ENCODE measurements at regions of chr6 and their contacts with region 1.

Region 1: DNA sequence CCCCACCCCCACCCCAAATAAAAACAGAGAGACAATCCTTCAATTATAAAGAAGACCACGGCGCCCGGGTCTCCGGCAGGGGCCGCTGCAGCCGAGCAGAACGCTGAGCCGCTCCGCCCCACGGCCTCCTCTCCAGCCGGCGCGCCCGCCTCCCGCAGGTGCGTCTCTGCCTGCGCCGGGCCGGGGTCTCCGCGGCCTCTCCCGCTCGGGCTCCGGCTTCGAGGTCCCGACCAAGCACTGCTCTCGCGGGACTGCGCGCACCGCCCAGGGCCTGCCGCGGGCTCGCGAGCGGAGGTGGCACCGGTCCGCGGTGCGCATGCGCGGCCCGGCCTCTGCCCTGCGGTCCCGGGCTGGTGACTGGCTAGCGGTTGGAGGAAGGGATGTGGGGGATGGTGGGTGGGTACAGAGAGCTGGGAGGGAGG is 241 bp upstream of the SIRT5 start:
- DNase-seq: peak; percentile 85 to 98 (median 91)
- ATAC-seq: peak; percentile 79
- H3K4me3 ChIP-seq: peak overlapping the region; percentile 97
- H3K4me3 Mint-ChIP-seq: peak overlapping the region; percentile 98
- H3K27ac ChIP-seq: peak overlapping the region; percentile 82 to 86
- H3K27ac Mint-ChIP-seq: peak overlapping the region; percentile 99
- H3K4me1 ChIP-seq: peaks cover 14% of the 10 kb centered on the region
- H3K4me1 Mint-ChIP-seq: peaks cover 34% of the 10 kb centered on the region
- H3K27me3 ChIP-seq: no peaks in the 10 kb centered on the region
- H3K27me3 Mint-ChIP-seq: no peaks in the 10 kb centered on the region
- CTCF ChIP-seq: peak; percentile 72

Region 2: DNA sequence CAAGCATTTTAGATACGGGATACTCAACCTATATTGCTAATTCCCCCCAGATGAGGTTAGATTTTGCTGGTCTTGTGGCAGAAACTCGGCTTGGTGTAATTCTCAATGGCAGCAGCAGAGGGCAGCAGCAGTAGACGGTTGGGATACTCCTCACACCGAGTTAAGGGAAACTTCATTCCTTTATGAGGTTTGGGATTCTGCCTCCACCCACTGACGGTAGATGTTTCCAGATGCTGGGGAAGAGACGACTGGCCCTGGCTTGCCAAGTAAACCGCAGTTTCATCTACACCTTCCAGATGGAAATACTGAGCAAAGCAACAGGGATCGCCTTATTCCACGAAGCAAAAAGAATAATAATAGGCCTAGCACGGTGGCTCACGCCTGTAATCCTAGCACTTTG is 237.6 kb before region 1 on chr6:
- CTCF ChIA-PET with region 1: interaction called, 7 read pairs
- POLR2A ChIA-PET with region 1: interaction called, 5 read pairs
- intact Hi-C with region 1: loop called (anchors 1 to 10 kb)
- DNase-seq: peak; percentile 54 to 84 (median 70)
- ATAC-seq: peak; percentile 87
- H3K4me3 ChIP-seq: no peak overlapping the region
- H3K4me3 Mint-ChIP-seq: no peak overlapping the region
- H3K27ac ChIP-seq: no peak overlapping the region
- H3K27ac Mint-ChIP-seq: no peak overlapping the region
- H3K4me1 ChIP-seq: peaks cover 6% of the 10 kb centered on the region
- H3K4me1 Mint-ChIP-seq: peaks cover 10% of the 10 kb centered on the region
- H3K27me3 ChIP-seq: no peaks in the 10 kb centered on the region
- H3K27me3 Mint-ChIP-seq: no peaks in the 10 kb centered on the region
- CTCF ChIP-seq: peak; percentile 93

Region 3: DNA sequence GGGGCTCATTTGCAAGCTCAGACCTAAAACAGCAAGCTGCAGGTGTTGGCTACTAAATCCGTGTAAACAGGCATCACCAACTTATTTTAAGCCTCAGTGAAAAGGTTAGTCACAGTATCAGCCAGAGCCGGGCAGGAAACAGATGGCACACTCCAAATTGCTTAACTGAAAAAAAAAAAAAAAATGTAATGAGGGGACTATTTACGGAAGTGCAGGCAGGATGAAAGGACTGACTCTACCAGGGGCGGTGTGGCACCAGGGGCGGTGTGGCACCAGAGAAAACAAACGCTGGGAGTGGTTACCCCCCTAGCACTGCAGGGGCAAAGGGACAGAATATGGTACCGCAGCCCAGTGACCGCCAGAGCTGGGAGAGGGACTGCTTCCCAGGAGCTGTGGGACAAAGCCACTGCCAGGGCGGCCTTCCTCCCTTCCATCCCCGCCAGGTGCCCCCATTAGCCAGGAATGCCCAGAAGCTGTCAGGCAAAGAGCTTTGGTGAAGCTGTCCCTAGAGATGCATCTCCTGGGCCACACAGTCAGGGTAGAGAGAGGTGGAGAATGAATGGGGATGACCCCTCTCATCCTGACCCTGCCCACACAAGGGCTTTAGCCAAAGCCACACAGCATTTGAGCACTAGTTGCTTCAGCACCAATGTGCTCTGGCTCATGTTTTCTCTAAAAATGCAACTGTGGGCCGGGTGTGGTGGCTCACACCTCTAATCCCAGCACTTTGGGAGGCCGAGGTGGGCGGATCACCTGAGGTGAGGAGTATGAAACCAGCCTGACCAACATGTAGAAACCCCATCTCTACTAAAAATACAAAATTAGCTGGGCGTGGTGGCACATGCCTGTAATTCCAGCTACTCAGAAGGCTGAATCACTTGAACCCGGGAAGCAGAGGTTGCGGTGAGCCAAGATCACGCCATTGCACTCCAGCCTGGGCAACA is 47.2 kb before region 1 on chr6:
- CTCF ChIA-PET with region 1: no interaction called
- POLR2A ChIA-PET with region 1: interaction called, 3 read pairs
- intact Hi-C with region 1: loop called in 1 of 2 experiments (anchors 1 kb)
- DNase-seq: peak in 11 of 14 experiments; percentile 3 to 65 (median 39)
- ATAC-seq: peak; percentile 96
- H3K4me3 ChIP-seq: no peak overlapping the region
- H3K4me3 Mint-ChIP-seq: peak overlapping the region; percentile 7
- H3K27ac ChIP-seq: peak overlapping the region in 1 of 2 donors; percentile 40
- H3K27ac Mint-ChIP-seq: peak overlapping the region; percentile 77
- H3K4me1 ChIP-seq: peaks cover 11% of the 10 kb centered on the region
- H3K4me1 Mint-ChIP-seq: peaks cover 18% of the 10 kb centered on the region
- H3K27me3 ChIP-seq: no peaks in the 10 kb centered on the region
- H3K27me3 Mint-ChIP-seq: no peaks in the 10 kb centered on the region
- CTCF ChIP-seq: no peak

Region 4: GRCh38 chr6:13795041-13795750 is 221.0 kb after region 1 on chr6:
- CTCF ChIA-PET with region 1: interaction called, 15 read pairs
- POLR2A ChIA-PET with region 1: no interaction called
- intact Hi-C with region 1: loop called in 1 of 2 experiments (anchors 5 kb)
- DNase-seq: peak; percentile 73 to 92 (median 82)
- ATAC-seq: peak; percentile 98
- H3K4me3 ChIP-seq: no peak overlapping the region
- H3K4me3 Mint-ChIP-seq: no peak overlapping the region
- H3K27ac ChIP-seq: no peak overlapping the region
- H3K27ac Mint-ChIP-seq: no peak overlapping the region
- H3K4me1 ChIP-seq: no peaks in the 10 kb centered on the region
- H3K4me1 Mint-ChIP-seq: no peaks in the 10 kb centered on the region
- H3K27me3 ChIP-seq: no peaks in the 10 kb centered on the region
- H3K27me3 Mint-ChIP-seq: no peaks in the 10 kb centered on the region
- CTCF ChIP-seq: peak; percentile 90

Region 5: DNA sequence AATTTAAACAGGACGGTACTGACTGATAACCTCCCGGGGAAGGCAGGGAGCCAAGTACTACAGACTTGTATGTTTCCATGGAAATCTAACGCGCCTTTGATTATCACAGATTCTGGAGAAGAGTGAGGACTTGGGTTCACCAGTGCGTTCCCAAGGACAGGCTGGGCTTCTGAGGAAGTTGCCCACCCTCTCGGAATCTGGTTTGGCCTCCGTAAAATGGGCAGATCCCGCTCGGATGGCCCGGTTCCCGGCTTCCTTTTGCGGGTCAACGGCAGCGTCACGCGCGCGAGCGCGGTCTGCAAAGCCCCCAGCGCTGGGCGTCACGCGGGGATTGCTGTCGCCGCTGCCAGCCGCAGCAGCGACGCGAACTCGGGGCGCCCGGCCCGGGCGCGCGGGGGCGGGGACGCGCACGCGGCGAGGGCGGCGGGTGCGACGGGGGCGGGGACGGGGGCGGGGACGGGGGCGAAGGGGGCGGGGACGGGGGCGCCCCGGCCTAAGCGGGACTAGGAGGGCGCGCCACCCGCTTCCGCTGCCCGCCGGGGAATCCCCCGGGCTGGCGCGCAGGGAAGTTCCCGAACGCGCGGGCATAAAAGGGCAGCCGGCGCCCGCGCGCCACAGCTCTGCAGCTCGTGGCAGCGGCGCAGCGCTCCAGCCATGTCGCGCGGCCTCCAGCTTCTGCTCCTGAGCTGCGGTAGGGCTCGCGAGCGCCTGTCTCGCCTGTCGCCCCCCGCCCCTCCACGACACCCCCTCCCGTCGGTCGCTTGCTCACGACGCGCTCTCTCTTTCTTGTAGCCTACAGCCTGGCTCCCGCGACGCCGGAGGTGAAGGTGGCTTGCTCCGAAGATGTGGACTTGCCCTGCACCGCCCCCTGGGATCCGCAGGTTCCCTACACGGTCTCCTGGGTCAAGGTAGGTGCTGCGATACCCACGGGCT is 543.3 kb after region 1 on chr6 and contains the start of gene CD83:
- CTCF ChIA-PET with region 1: no interaction called
- POLR2A ChIA-PET with region 1: interaction called, 4 read pairs
- intact Hi-C with region 1: loop called in 1 of 2 experiments (anchors 5 kb)
- DNase-seq: peak; percentile 65 to 97 (median 82)
- ATAC-seq: peak; percentile 96
- H3K4me3 ChIP-seq: peak within 1 kb of the TSS; percentile 98
- H3K4me3 Mint-ChIP-seq: peak within 1 kb of the TSS; percentile 96
- H3K27ac ChIP-seq: peak within 1 kb of the TSS; percentile 64 to 76
- H3K27ac Mint-ChIP-seq: peak within 1 kb of the TSS; percentile 94
- H3K4me1 ChIP-seq: peaks cover 19% of the 10 kb centered on the region
- H3K4me1 Mint-ChIP-seq: peaks cover 48% of the 10 kb centered on the region
- H3K27me3 ChIP-seq: no peaks in the 10 kb centered on the region
- H3K27me3 Mint-ChIP-seq: no peaks in the 10 kb centered on the region
- CTCF ChIP-seq: no peak
- total RNA-seq, gene CD83: 35.3 to 36.4 TPM